ENCODE measurements at regions of chr16 and their contacts with region 1.

Region 1: GRCh38 chr16:3880623-3881498 is at the start of gene CREBBP:
- DNase-seq: peak; percentile 64 to 91
- H3K4me3 ChIP-seq: peak within 1 kb of the TSS; percentile 92
- H3K27ac ChIP-seq: peak within 1 kb of the TSS; percentile 26; the same call in 1 of the 2 replicates
- H3K4me1 ChIP-seq: peaks cover 17% of the 10 kb centered on the region
- H3K27me3 ChIP-seq: no peaks in the 10 kb centered on the region
- CTCF ChIP-seq: no peak
- total RNA-seq, gene CREBBP: 70.5 and 74.9 TPM in 2 replicates

Region 2: GRCh38 chr16:3170440-3171180 is 710.3 kb before region 1 on chr16:
- CTCF ChIA-PET with region 1: no interaction called
- POLR2A ChIA-PET with region 1: no interaction called
- intact Hi-C with region 1: no loop called
- DNase-seq: no peak
- H3K4me3 ChIP-seq: no peak overlapping the region
- H3K27ac ChIP-seq: no peak overlapping the region
- H3K4me1 ChIP-seq: peaks cover 11% of the 10 kb centered on the region
- H3K27me3 ChIP-seq: no peaks in the 10 kb centered on the region
- CTCF ChIP-seq: no peak

Region 3: GRCh38 chr16:3640632-3641501 is 240.0 kb before region 1 on chr16:
- CTCF ChIA-PET with region 1: no interaction called
- POLR2A ChIA-PET with region 1: no interaction called
- intact Hi-C with region 1: no loop called
- DNase-seq: no peak
- H3K4me3 ChIP-seq: no peak overlapping the region
- H3K27ac ChIP-seq: no peak overlapping the region
- H3K4me1 ChIP-seq: peaks cover 31% of the 10 kb centered on the region
- H3K27me3 ChIP-seq: no peaks in the 10 kb centered on the region
- CTCF ChIP-seq: no peak

Region 4: DNA sequence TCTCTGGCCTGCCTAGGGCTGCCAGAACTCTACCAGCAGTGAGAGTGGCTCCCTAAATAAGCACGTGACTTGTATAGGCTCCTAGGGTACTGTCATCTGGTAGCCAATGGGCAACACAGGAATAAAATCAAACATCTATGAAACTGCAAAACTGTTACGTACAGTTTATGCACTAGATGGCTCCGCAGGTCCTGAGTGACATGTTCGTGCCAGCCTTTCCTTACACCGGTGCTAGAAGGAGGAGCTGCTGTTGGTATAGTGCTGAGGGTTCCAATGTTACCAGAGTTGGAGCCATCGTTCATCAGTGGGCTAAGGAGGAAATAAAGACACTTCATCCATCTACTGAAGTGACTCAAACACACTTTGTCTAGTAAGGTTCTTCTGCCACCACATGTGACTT is 100.3 kb before region 1 on chr16:
- CTCF ChIA-PET with region 1: no interaction called
- POLR2A ChIA-PET with region 1: no interaction called
- intact Hi-C with region 1: loop called (anchors 5 kb)
- DNase-seq: no peak
- H3K4me3 ChIP-seq: no peak overlapping the region
- H3K27ac ChIP-seq: no peak overlapping the region
- H3K4me1 ChIP-seq: no peaks in the 10 kb centered on the region
- H3K27me3 ChIP-seq: no peaks in the 10 kb centered on the region
- CTCF ChIP-seq: no peak

Region 5: GRCh38 chr16:3938848-3939624 is 58.2 kb after region 1 on chr16:
- CTCF ChIA-PET with region 1: interaction called, 17 read pairs
- POLR2A ChIA-PET with region 1: no interaction called
- intact Hi-C with region 1: loop called (anchors 2 kb)
- DNase-seq: peak; percentile 49 to 77
- H3K4me3 ChIP-seq: no peak overlapping the region
- H3K27ac ChIP-seq: no peak overlapping the region
- H3K4me1 ChIP-seq: no peaks in the 10 kb centered on the region
- H3K27me3 ChIP-seq: no peaks in the 10 kb centered on the region
- CTCF ChIP-seq: peak; percentile 85

Region 6: DNA sequence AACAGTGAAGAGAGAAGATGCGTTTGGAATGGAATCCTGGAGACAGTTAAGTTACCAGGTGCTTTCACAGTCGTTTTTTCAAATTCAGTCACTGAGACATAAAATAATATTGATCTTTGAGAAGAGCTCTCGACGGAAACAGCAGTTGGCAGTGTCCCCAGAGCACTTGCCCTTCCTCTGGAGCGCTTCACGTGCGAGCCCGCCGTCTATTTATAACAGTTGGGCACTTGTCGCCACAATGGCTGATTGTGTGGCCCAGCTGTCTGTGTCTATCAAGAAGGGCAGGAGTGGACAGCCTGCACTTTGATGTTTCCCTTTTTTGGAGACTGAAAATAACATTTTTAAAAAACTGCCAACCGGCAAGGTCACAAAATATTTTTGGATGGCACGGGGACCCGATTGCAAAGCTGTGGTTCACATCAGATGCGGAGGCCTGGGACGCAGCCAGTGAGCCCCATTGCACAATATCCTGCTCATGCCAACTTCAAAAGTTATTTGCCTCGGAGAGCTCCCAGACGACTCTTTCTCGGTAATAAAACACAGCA is 172.5 kb after region 1 on chr16:
- CTCF ChIA-PET with region 1: no interaction called
- POLR2A ChIA-PET with region 1: interaction called, 16 read pairs
- intact Hi-C with region 1: no loop called
- DNase-seq: no peak
- H3K4me3 ChIP-seq: peak overlapping the region; percentile 41; the same call in 1 of the 2 replicates
- H3K27ac ChIP-seq: peak overlapping the region; percentile 44
- H3K4me1 ChIP-seq: peaks cover 27% of the 10 kb centered on the region
- H3K27me3 ChIP-seq: no peaks in the 10 kb centered on the region
- CTCF ChIP-seq: no peak

Region 7: DNA sequence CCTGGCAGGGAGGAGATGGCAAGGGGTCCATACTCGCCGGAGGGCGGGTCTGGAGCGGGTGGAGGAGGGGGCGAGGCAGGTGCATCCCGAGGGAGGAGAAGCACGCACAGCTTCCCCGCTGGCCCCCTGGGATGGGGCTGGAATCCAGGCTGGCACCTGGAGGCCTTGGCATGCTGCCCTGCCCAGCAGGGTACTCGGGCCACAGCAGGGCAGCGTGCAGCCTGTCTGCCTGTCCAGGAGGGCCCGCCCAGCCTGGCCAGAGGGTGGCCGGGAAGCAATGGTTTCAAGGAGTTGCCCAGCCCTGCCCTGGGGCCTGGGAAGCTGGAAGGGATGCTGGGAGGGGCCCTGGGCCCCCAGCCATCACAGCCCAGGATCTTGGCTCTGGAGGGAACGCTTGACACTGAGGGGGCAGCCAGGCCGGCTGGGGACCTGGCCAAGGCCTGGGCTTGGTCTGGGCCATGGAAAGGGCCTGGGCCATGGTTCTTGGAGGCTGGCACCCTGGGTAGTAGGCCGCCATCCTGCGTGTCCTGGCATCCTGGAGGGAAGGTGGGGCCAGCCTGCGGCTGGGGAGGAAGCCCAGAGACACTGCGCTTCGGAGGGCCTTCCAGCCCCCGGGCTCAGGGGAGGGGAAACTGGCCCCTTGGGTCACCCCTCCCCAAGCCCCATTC is 436.1 kb after region 1 on chr16:
- CTCF ChIA-PET with region 1: no interaction called
- POLR2A ChIA-PET with region 1: no interaction called
- intact Hi-C with region 1: no loop called
- DNase-seq: peak; percentile 77 to 98
- H3K4me3 ChIP-seq: peak overlapping the region; percentile 78
- H3K27ac ChIP-seq: no peak overlapping the region
- H3K4me1 ChIP-seq: peaks cover 20% of the 10 kb centered on the region
- H3K27me3 ChIP-seq: no peaks in the 10 kb centered on the region
- CTCF ChIP-seq: no peak

Measured in PC-9 (cell line).